ENCODE measurements at regions of chr11 and their contacts with region 1.

Region 1: DNA sequence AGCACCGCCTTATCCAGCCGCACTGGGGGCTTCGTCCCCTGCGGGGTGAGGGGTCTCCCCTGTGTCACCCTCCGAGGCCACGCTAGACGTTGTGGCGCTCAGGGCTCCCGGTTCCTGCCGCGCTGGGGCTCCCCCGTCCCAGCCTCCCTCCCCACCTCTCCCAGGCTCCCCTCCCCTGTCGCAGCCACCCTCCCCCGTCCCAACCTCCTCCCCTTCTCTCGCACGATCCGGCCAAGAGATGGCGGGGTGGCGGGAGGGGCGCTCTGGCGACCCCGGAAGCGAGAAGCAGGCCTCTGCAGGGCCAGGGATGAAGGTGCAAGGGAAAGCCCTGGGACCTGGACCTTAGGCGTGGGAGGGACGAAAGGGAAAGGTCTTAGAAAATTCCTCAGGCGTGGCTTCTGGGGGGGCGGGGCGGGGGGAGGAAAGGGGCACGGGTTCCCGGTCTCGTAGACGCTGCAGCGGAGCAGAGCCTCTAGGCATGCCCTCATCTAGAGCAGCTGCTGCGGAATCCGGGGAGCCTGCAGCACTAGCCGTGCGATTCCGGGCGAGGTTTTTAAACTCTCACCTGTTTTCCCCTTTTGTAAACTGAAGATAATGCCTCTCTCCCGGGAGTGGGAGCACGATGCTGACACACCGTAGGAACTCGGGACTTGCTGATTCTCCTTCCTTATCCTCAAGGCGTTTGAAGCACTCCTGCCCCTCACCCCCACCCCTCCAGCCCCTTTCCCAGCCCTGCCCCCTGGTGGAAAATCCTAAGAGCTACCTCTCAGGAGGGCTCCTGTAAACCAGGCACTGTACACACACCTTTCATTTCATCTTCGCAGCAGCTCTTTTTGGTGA is 14.4 kb downstream of the KCNJ5 start:
- DNase-seq: no peak
- H3K4me3 ChIP-seq: peak overlapping the region; percentile 60
- CTCF ChIP-seq: peak; percentile 29

Region 2: GRCh38 chr11:128917144-128917724 is 11.7 kb after region 1 on chr11:
- CTCF ChIA-PET with region 1: interaction called, 20 read pairs
- POLR2A ChIA-PET with region 1: no interaction called
- DNase-seq: no peak
- H3K4me3 ChIP-seq: no peak overlapping the region
- CTCF ChIP-seq: no peak

Region 3: GRCh38 chr11:128931668-128932067 is 26.1 kb after region 1 on chr11:
- CTCF ChIA-PET with region 1: no interaction called
- POLR2A ChIA-PET with region 1: no interaction called
- DNase-seq: no peak
- H3K4me3 ChIP-seq: no peak overlapping the region
- CTCF ChIP-seq: no peak